GM12878 (cell line): ENCODE measurements at regions of chr1 and their contacts with region 1.

Region 1: DNA sequence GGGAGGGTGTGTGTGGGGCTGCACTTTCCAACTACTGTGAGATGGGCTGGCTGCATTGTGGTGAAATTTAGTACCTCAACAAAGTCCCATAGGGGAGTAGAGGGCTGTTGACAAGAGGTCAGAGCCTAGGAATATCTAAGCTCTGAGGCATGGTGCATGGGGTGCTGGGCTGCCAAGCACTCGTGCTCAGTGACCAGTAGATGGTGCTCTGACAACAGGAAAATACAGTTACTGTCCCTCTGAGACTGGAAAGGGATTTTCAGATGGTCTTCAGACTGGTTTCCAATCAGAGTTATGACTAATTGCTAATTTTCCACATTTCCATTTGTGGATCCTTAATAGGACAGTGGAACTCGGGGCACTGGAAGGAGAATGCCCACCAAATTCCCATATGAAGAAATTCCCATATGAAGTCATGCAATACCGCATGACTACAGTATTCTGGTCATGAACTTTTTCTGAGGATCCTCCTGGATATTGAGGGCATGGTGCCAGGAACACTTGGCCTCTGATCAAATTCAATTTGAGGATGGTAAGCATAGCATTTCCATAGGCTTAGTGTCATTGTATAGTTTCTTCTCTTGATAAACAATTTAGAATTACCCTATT is 4.1 kb upstream of the CACNA1E start:
- DNase-seq: peak; percentile 56
- ATAC-seq: peak; percentile 66
- H3K4me3 ChIP-seq: no peak overlapping the region
- H3K27ac ChIP-seq: no peak overlapping the region
- H3K4me1 ChIP-seq: peaks cover 20% of the 10 kb centered on the region
- H3K27me3 ChIP-seq: no peaks in the 10 kb centered on the region
- CTCF ChIP-seq: peak; percentile 87 to 95 (median 92)
- EP300 ChIP-seq: no peak
- POLR2A ChIP-seq: no peak
- RAD21 ChIP-seq: peak; percentile 95

Region 2: DNA sequence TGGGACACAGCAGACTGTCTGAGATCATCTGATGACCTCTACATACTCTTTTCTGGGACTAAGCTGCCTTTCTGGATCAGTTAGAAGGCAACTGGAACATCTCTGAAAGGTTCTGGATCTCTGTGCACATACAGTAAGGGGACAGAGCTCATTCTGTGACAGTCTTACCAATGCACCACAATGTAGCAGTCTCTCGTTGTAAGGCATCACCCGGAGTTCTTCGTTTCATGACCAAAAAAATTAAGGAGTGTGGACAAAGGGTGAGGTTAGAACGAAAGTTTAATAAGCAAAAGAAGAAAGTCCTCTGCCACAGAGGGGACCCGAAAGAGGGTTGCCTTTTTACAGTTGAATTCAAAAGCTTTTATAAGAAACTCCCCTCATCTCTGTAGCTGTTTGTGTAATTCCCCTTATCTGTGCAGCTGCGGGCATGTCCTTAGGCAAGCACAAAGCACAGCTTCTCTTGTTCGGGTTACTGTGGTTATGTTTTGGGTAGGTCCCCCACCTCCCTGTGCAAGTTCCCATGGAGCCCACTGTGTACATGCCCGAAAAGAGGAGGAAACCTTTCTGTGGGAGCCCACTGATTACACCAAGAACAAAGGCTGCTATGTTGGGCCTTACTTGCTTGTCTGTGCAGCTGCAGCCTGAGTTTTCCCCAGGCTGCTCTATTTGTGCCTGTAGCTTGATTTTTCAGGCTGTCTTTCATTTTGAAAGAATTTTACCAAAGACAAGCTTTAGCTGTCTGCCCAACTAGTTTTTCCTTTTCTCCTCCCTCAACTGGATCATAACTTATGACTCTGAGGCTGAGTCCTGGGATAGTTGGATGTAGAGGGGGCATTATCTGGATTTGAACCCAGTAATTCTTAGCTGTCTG is 49.0 kb before region 1 on chr1:
- CTCF ChIA-PET with region 1: interaction called, 54 read pairs
- POLR2A ChIA-PET with region 1: interaction called, 38 read pairs
- RAD21 ChIA-PET with region 1: interaction called, 155 read pairs
- SMC1A ChIA-PET with region 1: interaction called, 123 read pairs
- in situ Hi-C with region 1: no loop called
- intact Hi-C with region 1: loop called (anchors 1 kb)
- DNase-seq: peak; percentile 79
- ATAC-seq: peak; percentile 90
- H3K4me3 ChIP-seq: no peak overlapping the region
- H3K27ac ChIP-seq: peak overlapping the region; percentile 83
- H3K4me1 ChIP-seq: peaks cover 39% of the 10 kb centered on the region
- H3K27me3 ChIP-seq: no peaks in the 10 kb centered on the region; a peak in 1 of 4 replicates
- CTCF ChIP-seq: no peak
- EP300 ChIP-seq: peak; percentile 56 to 75
- POLR2A ChIP-seq: no peak
- RAD21 ChIP-seq: no peak

Region 3: DNA sequence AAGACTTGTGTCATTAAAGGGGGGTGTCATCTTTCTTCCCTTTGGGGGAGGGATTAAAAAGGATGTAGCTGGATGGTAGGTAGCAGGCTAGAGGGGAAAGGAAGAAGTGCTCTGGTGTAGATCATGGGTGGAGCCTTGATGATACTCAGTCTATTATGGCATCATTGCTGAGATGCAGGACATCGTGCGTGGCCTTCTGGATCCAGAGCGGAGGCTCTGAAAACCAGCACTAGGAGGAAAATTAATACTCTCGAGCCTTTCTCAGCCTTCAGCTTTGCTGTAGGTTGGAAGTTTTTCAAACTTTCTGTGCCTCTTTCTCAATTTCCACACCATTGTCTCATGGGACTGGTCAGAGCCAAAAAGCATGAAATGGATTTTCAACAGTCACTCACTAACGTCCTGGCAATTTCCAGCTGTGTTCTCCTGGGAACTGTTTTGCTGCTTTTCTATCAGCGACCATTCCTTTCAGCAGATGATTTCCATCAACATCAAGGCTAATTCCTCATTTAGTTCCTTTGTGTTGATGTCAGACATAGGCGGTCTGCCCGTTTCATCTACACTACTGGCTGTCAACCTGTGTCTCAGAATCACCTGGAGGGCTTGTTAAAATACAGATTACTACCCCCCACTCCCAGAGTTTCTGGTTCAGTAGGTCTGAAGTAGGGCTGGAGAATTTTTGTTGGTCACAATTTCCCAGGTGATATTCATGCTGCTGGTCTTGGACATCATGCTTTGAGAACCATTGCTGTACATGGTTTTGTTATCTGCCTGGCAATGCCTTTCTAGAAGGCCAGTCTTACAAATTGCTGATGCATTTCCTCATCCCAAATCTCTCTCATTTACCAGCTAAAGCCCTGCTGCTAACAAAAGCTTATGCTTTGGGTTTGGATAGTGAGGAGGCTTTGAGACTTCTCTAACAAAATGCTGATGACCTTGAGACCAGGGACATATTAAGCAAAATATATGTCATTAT is 11.8 kb after region 1 on chr1:
- CTCF ChIA-PET with region 1: interaction called, 18 read pairs
- POLR2A ChIA-PET with region 1: interaction called, 25 read pairs
- RAD21 ChIA-PET with region 1: interaction called, 41 read pairs
- SMC1A ChIA-PET with region 1: interaction called, 100 read pairs
- in situ Hi-C with region 1: no loop called
- intact Hi-C with region 1: no loop called
- DNase-seq: no peak
- ATAC-seq: no peak
- H3K4me3 ChIP-seq: peak overlapping the region; percentile 10; the same call in 1 of the 2 replicates
- H3K27ac ChIP-seq: no peak overlapping the region
- H3K4me1 ChIP-seq: 0 out of 2 replicates have a peak, but pooled peaks cover 6% of the 10 kb centered on the region
- H3K27me3 ChIP-seq: no peaks in the 10 kb centered on the region
- CTCF ChIP-seq: no peak
- EP300 ChIP-seq: no peak
- POLR2A ChIP-seq: no peak
- RAD21 ChIP-seq: no peak

Region 4: DNA sequence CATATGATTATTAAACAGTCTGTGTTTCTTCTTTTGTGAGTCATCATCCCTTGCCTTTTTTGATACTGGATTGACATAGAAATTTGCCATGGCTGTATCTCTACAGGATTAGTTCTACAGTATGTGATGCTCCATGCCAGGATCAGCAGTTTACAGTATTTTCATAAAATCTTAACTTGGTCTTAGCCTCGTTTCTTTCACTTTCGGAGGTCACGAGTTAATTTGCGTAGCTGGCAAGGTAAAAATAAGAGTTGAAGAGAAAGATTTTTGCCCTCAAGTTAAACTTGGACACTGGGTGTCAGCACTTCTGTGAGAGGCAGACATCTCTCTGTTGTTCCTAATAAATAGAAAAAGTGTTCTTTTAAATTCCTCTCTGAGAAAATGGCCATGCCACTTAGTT is 83.2 kb after region 1 on chr1:
- CTCF ChIA-PET with region 1: interaction called, 5 read pairs
- POLR2A ChIA-PET with region 1: interaction called, 6 read pairs
- RAD21 ChIA-PET with region 1: interaction called, 13 read pairs
- SMC1A ChIA-PET with region 1: interaction called, 34 read pairs
- in situ Hi-C with region 1: no loop called
- intact Hi-C with region 1: loop called (anchors 5 kb)
- DNase-seq: no peak
- ATAC-seq: peak; percentile 73
- H3K4me3 ChIP-seq: no peak overlapping the region
- H3K27ac ChIP-seq: no peak overlapping the region
- H3K4me1 ChIP-seq: no peaks in the 10 kb centered on the region
- H3K27me3 ChIP-seq: no peaks in the 10 kb centered on the region
- CTCF ChIP-seq: no peak; a peak in 1 of 6 replicates
- EP300 ChIP-seq: no peak
- POLR2A ChIP-seq: no peak
- RAD21 ChIP-seq: no peak

Region 5: DNA sequence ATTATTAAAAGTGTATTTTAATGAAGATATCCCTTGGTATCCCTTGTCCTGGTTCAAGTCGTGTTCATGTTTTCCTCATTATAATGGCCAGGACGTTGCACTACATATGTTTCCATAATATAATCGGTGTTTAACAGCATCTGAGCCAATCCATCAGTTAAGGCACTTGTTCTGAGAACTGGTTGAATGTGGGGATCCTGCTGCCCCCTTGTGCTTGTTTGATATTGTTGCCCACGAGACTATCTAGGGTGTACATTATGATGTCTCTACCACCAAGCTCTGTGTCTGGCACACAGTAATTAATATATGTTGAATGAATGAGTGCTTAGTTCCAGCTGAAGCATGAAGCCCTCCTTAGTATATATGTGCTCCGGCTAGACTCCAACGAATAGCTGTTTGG is 197.0 kb after region 1 on chr1:
- CTCF ChIA-PET with region 1: interaction called, 175 read pairs
- POLR2A ChIA-PET with region 1: no interaction called
- RAD21 ChIA-PET with region 1: interaction called, 49 read pairs
- SMC1A ChIA-PET with region 1: interaction called, 91 read pairs
- in situ Hi-C with region 1: loop called (anchors 5 kb)
- intact Hi-C with region 1: loop called (anchors 1 kb)
- DNase-seq: peak; percentile 11
- ATAC-seq: peak; percentile 91
- H3K4me3 ChIP-seq: no peak overlapping the region
- H3K27ac ChIP-seq: no peak overlapping the region
- H3K4me1 ChIP-seq: no peaks in the 10 kb centered on the region
- H3K27me3 ChIP-seq: no peaks in the 10 kb centered on the region
- CTCF ChIP-seq: peak; percentile 60 to 66 (median 60); a peak in 4 of 6 replicates
- EP300 ChIP-seq: no peak
- POLR2A ChIP-seq: no peak
- RAD21 ChIP-seq: peak; percentile 71

Region 6: GRCh38 chr1:182029379-182030331 is 550.4 kb after region 1 on chr1:
- CTCF ChIA-PET with region 1: interaction called, 3 read pairs
- POLR2A ChIA-PET with region 1: interaction called, 3 read pairs
- RAD21 ChIA-PET with region 1: interaction called, 11 read pairs
- SMC1A ChIA-PET with region 1: no interaction called
- in situ Hi-C with region 1: no loop called
- intact Hi-C with region 1: no loop called
- DNase-seq: peak; percentile 83
- ATAC-seq: peak; percentile 97
- H3K4me3 ChIP-seq: peak overlapping the region; percentile 83
- H3K27ac ChIP-seq: peak overlapping the region; percentile 66
- H3K4me1 ChIP-seq: no peaks in the 10 kb centered on the region
- H3K27me3 ChIP-seq: no peaks in the 10 kb centered on the region
- CTCF ChIP-seq: peak; percentile 20 to 44 (median 30); a peak in 3 of 6 replicates
- EP300 ChIP-seq: no peak; a peak in 1 of 4 replicates
- POLR2A ChIP-seq: peak; percentile 91
- RAD21 ChIP-seq: 0 out of 2 replicates have a peak, but pooled peaks have one; percentile 8

Region 7: GRCh38 chr1:182084487-182085316 is 605.5 kb after region 1 on chr1:
- CTCF ChIA-PET with region 1: interaction called, 57 read pairs
- POLR2A ChIA-PET with region 1: interaction called, 3 read pairs
- RAD21 ChIA-PET with region 1: interaction called, 35 read pairs
- SMC1A ChIA-PET with region 1: interaction called, 35 read pairs
- in situ Hi-C with region 1: no loop called
- intact Hi-C with region 1: no loop called
- DNase-seq: no peak
- ATAC-seq: peak; percentile 94
- H3K4me3 ChIP-seq: no peak overlapping the region
- H3K27ac ChIP-seq: no peak overlapping the region
- H3K4me1 ChIP-seq: no peaks in the 10 kb centered on the region
- H3K27me3 ChIP-seq: no peaks in the 10 kb centered on the region
- CTCF ChIP-seq: peak; percentile 67 to 75 (median 74)
- EP300 ChIP-seq: no peak
- POLR2A ChIP-seq: no peak
- RAD21 ChIP-seq: peak; percentile 89